HEK293T (cell line): ENCODE measurements at regions of chr15 and their contacts with region 1.

Region 1: DNA sequence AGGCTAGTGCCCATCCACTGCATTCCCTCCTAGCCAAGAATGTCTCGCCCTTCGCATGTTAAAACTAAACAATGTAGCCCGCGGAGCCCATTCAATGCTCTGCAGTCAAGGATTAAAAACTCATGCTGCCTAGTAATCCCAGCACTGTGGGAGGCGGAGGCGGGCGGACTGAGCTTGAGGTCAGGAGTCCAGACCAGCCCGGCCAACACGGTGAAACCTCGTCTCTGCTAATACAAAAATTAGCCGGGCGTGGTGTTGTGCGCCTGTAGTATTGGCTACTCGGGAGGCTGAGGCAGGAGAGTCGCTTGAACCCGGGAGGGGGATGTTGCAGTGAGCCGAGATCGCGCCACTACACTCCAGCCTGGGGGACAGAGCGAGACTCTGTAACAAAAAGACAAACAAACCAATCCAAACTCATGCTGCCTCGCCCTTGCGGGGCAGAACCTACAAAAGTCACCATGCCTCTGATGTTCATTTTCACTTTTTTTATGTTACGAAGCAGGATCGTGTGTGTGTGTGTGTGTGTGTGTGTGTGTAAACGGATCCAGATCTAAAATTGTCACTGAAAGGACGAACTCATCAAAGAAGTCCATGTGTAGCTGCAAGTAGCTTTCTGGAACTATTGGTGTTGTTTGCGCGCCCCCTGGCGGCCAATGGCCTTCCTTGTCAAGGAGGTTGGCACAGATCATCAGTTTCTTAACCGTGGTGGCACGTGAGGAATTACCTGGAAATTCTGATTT is 54.8 kb upstream of the SPESP1 start:
- DNase-seq: peak; percentile 81

Region 2: DNA sequence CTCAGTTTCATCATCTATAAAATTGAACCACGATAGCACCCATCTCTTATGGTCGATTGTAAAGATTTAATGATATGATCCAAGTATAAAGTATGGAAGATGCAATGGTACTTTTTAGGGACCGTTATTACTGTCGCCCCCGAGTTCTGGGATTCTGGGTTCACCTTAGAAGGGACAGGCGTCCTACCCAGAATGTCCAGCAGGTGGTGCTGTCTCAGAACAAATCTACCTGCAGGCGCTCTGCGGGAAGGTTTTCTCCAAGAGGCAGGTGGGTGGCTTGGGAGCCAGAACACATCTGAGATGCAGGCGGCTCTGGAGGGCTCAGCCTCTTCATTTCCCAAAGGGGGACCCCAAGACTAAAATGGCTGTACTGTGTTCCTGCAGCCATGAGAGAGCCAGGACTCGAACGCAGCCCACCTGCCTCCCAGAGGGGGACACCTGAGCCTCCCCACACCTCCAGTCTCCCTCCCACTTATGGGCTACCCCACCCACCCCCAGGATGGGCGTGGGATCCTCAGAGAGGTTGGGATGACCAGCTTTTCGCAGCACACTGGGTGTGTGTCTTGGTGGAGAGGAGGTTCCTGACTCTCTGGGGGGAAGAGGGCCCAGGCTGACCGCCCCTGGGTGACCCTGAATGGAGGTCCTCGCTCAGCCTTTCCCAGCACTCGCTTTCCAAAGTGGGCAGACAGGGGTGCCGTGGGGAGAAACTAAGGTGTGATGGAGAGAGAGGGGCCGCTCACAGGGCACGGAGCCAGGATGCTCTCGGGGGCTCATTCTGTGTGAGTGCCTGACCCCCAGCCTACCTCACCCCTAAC is 324.9 kb before region 1 on chr15:
- CTCF ChIA-PET with region 1: interaction called, 17 read pairs
- POLR2A ChIA-PET with region 1: no interaction called
- DNase-seq: peak; percentile 68

Region 3: DNA sequence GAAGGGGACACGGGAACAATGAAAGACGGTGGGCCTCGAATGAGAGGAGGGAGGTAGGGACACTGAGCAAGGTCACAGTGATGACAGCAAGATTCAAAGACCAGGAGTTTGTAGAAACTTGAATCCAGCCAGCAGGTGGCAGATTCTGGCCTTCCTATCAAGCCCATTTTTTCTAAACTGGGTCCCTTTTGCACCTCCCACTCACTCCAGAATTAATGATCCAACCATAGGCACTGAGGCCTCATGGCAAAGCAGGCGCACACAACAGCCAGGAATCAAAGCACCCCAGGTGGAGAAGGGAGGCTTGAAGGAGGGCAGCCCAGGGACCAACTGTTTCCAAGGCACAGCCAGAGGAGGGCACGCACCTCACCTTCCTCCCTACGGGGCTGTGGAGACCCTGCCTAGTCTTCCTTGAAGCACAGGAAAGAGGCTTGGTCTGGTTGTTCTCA is 145.1 kb before region 1 on chr15:
- CTCF ChIA-PET with region 1: interaction called, 25 read pairs
- POLR2A ChIA-PET with region 1: no interaction called
- DNase-seq: peak; percentile 56

Region 4: DNA sequence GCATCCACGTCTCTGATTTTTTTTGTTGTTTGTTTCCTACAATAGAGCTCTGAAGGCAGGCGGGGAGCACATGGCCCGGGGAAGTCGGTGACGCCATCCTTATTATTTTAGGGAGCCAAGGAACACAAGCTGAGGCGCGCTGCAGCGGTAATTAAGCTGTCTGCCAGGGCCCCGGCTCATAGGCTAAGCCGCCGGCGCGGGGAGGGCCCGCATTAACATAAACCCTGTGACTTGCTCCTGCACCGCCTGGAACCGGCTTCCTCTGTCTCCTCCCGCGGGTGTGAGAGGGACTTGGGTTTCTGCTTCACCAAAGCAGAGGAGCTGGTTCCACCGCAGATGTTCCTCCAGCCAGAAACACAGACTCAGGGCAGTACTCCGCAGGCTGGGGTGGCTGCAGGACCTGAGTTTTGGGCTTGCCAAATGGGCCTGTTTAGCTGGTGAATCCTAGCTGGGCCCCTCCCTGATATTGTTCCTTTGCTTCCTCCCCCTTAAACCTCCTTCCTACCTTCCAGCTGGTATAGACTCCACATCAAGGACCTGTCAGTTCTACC is 80.2 kb before region 1 on chr15:
- CTCF ChIA-PET with region 1: interaction called, 13 read pairs
- POLR2A ChIA-PET with region 1: interaction called, 4 read pairs
- DNase-seq: peak; percentile 21

Region 5: DNA sequence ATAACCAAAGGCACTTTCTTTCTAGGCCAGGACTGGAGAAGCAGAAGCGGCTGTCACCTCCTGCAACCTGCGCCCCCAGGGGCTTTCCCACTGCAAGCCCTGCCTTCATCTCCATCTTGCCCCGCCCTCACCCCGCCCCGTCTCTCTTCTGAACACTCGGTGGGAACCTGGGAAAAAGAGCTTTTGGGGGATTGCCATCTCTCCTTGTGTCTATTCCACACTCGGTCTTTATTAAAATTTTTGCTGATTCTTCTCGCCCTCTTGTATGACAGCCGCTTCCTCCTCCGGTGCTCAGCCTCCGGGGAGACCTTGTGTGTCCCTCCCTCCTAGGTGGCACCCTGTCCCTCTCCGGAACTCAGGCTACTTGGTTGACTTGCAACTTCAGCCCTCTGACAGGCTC is 12.9 kb after region 1 on chr15:
- CTCF ChIA-PET with region 1: no interaction called
- POLR2A ChIA-PET with region 1: no interaction called
- DNase-seq: no peak

Region 6: DNA sequence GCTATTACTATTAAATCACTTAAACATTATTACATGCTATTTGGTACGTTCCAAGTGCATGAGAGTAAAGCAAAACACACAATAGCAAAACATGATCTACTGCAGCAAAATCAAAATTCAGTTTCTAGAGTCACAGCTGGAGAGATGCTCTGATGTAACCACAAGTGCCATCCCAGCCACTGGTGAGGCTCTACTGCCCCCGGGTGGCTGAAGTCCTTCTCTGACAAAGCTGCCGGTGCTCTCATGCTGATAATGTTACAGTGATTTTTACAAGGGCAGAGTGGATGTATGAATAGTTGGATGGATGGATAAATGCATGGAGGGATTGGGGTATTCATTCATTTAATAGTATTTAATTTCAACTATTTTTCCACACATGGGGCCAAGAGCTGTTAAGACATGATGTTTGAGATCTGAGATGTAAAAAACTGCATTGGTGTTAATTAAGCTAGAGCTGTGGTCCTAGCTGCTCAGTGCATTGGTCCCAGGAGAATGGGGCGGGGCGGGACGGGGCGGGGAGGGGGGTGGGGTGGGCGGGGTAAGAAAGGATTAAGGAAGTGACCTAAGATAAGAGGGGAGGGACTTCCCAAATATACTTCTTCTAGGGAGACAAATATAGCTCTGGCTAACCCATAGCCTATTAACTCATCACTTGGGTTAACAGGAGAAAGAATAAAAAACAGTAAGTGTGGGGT is 49.5 kb after region 1 on chr15:
- CTCF ChIA-PET with region 1: interaction called, 18 read pairs
- POLR2A ChIA-PET with region 1: no interaction called
- DNase-seq: peak; percentile 87

Region 7: DNA sequence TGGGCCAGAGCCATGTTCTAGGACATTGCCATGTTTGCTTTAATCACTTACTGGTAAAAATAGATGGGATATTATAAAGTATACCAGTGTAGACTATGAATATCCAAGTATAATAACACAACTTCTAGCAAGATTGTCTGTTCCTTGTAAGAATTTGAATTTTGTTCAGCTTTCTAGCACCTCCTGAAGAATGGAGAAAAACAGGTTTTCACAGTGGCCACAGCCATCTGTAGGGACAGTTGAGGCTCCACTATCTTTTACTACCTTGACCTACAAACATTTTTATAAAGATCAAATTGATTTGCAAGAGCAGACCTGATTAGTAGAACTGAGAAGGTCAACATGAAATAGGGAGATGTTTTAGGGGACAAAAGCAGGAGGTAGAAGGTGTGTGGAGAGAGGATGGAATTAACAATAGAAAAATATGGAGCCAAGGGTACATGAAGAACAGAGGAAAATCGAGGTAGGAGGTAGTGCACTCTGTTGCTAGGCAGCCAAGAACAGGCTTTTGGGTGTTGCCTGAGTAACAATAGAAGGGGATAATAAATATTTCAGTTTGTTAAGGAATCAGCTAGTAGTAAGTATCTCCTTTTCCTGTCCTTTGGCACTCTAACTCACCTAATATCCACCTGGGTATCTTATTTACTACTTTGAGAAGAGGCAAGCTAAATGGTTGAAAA is 63.8 kb after region 1 on chr15:
- CTCF ChIA-PET with region 1: no interaction called
- POLR2A ChIA-PET with region 1: no interaction called
- DNase-seq: no peak

Region 8: DNA sequence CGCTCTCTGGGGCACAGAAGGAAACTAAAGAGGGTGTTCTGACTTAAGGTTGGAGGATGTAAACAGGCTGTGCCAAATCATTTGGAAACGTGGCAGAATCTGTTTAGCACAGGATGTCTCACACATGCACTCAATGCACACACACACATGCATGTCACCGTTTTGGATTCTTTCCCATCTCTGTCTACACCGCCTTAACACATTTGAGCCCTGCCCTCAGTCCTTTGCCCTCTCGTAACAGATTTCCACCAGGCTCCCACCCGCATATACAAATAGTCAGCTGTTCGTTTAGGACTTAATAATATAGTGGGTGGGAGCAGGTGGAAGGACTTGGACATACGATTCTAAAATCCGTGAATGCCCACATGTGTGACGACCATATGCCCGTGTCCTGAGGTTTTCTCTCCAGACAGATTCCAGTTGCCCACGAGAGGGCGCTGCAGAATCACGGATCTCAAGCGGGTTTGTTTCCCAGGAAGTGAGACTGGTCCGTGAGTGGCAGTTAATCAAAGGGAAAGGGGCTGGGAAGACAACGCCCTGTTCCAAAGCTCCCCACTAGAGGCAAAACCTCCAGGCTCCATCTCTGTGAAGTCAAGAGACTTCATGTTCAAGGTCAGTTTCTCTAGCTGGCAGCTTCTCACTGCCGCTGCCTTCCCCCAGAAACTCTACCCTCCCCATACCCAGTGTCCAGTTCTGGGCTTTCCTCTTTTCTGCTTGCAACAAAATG is 183.4 kb after region 1 on chr15:
- CTCF ChIA-PET with region 1: no interaction called
- POLR2A ChIA-PET with region 1: no interaction called
- DNase-seq: peak; percentile 94

Region 9: GRCh38 chr15:69081310-69082004 is 205.9 kb after region 1 on chr15:
- CTCF ChIA-PET with region 1: no interaction called
- POLR2A ChIA-PET with region 1: no interaction called
- DNase-seq: no peak